Dorsolateral prefrontal cortex (tissue), 120 donors: ENCODE measurements at regions of chr2 and their contacts with region 1.

Region 1: DNA sequence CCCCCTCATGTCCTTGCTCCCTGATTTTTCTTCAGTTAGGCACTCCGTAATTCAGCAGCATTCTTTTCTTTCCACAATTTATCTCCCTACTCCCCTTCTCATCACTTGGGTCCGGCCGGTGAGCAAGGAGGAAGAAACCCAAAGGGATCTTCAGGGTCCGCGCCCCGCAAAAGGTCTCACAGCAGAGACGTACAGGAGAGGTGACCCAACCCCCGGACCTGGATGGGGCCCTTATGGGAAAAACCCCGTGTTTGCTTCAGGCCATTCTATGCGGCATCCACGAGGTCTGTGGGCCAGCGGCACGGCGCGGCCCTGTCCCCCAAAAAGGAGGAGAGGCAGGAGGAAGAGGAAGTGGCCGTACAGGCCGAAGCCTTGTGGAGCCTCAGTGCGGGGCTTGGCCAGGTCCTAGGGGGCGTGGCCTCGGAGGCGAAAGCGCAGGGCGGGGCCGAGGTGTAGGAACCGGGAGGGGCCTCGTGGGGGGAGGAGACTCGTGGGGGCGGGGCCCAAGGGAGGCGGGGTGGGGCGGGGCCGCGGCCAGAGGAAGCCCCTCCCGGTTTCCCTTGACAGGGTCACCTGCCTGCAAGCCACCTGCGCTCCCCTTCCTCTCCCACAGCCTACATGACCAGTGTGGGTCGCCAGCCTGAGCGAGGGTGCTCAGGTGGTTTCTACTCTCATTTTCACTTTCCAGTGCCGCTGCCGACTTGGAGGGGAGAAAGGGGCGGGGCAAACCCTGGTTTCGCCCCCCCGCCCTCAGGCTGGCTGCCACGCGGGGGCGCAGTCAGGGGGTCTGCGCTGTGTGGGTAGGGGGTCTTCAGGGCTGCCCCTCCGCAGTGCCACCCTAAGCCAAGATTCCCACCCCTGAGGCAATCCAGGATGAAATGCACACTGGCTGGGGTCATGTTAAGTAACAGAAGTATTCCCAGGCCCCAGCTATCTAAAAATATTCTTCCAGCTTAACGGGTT is 156.4 kb upstream of the XPO1 start:
- DNase-seq: peak; percentile 87 to 94 (median 92)
- H3K4me3 ChIP-seq: peak overlapping the region; percentile 57 to 96 (median 86)
- H3K27ac ChIP-seq: peak overlapping the region; percentile 59 to 96 (median 90)
- H3K27me3 ChIP-seq: no peaks in the 10 kb centered on the region
- CTCF ChIP-seq: peak in 52 of 56 donors; percentile 32 to 82 (median 58)

Region 2: DNA sequence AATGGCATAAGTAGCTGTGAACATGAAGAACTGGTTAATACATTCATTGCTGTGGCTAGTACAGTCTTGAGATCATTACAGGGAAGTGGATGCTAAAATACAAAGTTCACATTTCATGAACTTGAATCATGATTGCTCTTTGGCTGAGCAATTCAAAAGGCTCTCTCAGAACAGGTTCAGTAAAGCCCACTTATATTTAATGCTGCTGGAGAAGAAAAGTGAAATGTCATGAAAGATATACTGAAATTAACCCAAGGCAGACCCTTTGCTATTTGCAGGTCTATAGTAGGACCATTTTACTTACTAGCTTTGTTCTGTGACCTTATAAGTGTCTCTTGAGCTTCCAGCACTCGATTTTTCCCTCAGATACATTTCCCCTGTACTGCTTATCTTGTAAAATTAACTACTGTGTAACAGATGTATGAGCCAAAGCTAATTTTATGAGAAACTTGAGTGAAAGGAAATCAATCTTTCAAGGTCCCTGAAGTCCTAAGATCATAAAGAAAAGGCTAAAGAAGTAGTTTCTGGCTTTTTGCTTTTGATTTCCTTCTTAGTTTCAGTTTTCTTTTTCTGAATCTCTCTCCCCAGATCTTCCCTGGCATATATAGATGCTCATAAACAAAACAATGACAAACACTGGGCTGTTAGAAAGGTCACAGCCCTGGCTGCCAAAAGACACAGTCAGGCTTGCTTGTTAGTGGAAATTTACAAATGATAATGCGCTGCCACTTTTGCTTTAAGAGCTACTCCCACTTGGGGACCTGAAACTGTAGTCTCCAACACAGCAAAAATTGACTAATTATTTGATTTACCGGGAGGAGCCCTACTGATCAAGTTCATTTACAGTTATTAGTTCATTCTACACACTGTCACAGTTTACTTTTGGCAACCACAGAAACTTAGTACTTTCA is 23.7 kb before region 1 on chr2:
- intact Hi-C with region 1: loop called in 1 of 2 experiments (anchors 1 kb)
- DNase-seq: peak in 8 of 10 donors; percentile 16 to 78 (median 52)
- H3K4me3 ChIP-seq: peak overlapping the region in 58 of 59 donors; percentile 5 to 65 (median 41)
- H3K27ac ChIP-seq: peak overlapping the region; percentile 76 to 100 (median 98)
- H3K27me3 ChIP-seq: no peaks in the 10 kb centered on the region
- CTCF ChIP-seq: peak in 5 of 56 donors; percentile 16 to 29 (median 20)

Region 3: GRCh38 chr2:61733563-61733962 is 39.0 kb after region 1 on chr2:
- intact Hi-C with region 1: no loop called
- DNase-seq: peak in 1 of 10 donors; percentile 9
- H3K4me3 ChIP-seq: no peak overlapping the region
- H3K27ac ChIP-seq: no peak overlapping the region
- H3K27me3 ChIP-seq: no peaks in the 10 kb centered on the region
- CTCF ChIP-seq: no peak

Region 4: DNA sequence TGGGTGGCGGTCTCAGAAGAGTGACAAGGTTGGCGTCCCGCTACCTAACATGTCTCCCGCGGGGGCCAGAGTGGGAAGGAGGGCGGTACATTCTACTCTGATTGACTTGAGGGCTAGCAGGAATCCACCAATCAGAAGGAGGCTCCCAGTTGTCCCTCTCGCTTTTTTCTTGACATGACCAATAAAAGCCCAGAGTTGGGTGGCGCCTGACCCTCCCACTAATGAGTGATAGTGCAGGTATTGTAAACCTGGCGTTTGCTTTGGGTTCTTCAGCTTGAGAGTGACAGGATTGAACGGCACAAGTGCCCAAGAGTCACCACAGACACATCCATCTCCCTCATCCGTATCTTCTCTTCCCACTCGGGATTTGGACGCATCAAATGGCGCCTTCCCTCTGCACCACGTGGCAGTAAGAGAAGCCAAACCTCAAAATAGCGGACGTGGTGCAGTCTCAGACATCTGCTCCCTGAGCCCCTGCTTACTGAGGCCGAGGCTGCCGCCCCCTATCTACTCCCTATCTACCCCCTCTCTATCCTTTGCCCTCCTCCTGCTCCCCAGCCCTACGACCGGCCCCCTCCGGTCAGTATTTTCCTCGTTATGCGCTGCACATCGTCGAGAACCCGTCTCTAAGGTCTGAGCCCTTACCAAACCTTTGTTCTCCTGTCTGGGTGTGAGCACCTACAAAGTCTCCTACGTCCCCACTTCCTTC is 160.0 kb after region 1 on chr2:
- intact Hi-C with region 1: loop called (anchors 10 kb)
- DNase-seq: peak; percentile 66 to 97 (median 94)
- H3K4me3 ChIP-seq: peak overlapping the region; percentile 39 to 100 (median 88)
- H3K27ac ChIP-seq: peak overlapping the region; percentile 60 to 97 (median 89)
- H3K27me3 ChIP-seq: no peaks in the 10 kb centered on the region
- CTCF ChIP-seq: peak in 9 of 56 donors; percentile 4 to 24 (median 11)